Activated T-helper 2 cell treated with anti-CD3 and anti-CD28 coated beads, Interferon-gamma antibody, Interleukin-2, Interleukin-4, amounts not matched to agents 10 μg/mL and 5 μg/mL and 100 μg/mL, durations not matched to agents 14 hours and 24 hours and 36 hours (primary cell): ENCODE measurements at regions of chr1 and their contacts with region 1.

Region 1: GRCh38 chr1:32876341-32877210 is 5.9 kb upstream of the FNDC5 start:
- DNase-seq: peak; percentile 58
- H3K4me3 Mint-ChIP-seq: no peak overlapping the region
- H3K27ac Mint-ChIP-seq: no peak overlapping the region
- H3K4me1 Mint-ChIP-seq: peaks cover 4% of the 10 kb centered on the region
- H3K27me3 Mint-ChIP-seq: peaks cover 26% of the 10 kb centered on the region

Region 2: GRCh38 chr1:33086384-33086850 is 209.8 kb after region 1 on chr1:
- intact Hi-C with region 1: loop called (anchors 2 kb)
- DNase-seq: no peak
- H3K4me3 Mint-ChIP-seq: no peak overlapping the region
- H3K27ac Mint-ChIP-seq: no peak overlapping the region
- H3K4me1 Mint-ChIP-seq: peaks cover 32% of the 10 kb centered on the region
- H3K27me3 Mint-ChIP-seq: peaks cover 25% of the 10 kb centered on the region